B cell (primary cell): ENCODE measurements at regions of chr6 and their contacts with region 1.

Region 1: DNA sequence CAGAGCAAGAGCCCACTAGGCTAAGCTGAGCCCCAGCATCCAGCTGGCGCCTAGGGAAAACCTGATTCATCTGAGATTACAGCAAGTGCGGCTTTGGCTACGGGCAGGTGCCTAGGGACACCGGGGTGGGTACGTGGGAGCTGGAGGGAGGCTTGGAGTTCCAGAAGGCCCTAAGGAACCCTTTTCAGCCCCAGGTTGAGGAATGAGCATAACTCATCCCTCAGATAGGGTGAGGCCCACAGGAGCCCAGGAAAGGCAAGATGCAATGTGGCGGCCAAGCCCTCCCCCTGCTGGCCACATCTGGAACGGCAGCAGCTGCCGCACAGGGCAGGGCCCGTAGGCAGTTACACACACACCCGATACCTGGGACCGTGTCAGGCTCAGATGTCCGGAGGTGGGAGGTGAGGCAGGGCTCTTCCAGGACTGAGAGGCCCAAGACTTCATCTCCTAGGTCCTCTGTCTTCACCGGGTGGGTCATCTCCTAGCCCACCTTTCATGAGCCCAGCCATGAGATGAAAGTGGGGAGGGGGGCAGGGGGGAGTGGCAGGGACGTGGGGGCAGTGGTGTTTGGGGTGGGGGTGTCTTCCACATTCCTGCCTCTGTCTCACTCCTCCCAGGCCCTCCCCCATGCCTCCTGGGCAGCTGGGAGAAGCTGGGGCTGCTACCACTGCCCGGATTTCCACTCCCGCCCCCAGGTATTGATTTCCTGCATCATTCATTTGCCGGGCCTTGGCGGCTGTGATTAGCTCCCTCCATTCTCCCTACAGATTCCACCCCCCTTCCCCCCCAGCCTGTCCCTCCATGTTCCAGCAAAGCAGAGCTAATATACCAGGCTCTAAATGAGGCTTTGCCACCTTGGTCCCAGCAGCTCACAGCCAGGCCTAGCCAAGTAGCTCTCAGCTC is 5.5 kb downstream of the MDGA1 start:
- DNase-seq: peak; percentile 84
- ATAC-seq: peak; percentile 82
- H3K4me3 ChIP-seq: no peak overlapping the region
- H3K4me3 Mint-ChIP-seq: no peak overlapping the region
- H3K27ac ChIP-seq: no peak overlapping the region
- H3K27ac Mint-ChIP-seq: no peak overlapping the region
- H3K4me1 ChIP-seq: peaks cover 21 to 23% of the 10 kb centered on the region in 2 donors
- H3K4me1 Mint-ChIP-seq: peaks cover 26% of the 10 kb centered on the region
- H3K27me3 ChIP-seq: peaks cover 0 to 34% (median 14%) of the 10 kb centered on the region in 4 experiments
- H3K27me3 Mint-ChIP-seq: peaks cover 26% of the 10 kb centered on the region
- CTCF ChIP-seq: peak; percentile 95

Region 2: GRCh38 chr6:37381579-37381978 is 310.6 kb before region 1 on chr6:
- CTCF ChIA-PET with region 1: interaction called, 3 read pairs
- POLR2A ChIA-PET with region 1: no interaction called
- intact Hi-C with region 1: loop called (anchors 5 kb)
- DNase-seq: peak; percentile 67
- ATAC-seq: peak; percentile 28
- H3K4me3 ChIP-seq: no peak overlapping the region
- H3K4me3 Mint-ChIP-seq: no peak overlapping the region
- H3K27ac ChIP-seq: no peak overlapping the region
- H3K27ac Mint-ChIP-seq: no peak overlapping the region
- H3K4me1 ChIP-seq: peaks cover 8 to 26% of the 10 kb centered on the region in 2 donors
- H3K4me1 Mint-ChIP-seq: peaks cover 23% of the 10 kb centered on the region
- H3K27me3 ChIP-seq: no peaks in the 10 kb centered on the region
- H3K27me3 Mint-ChIP-seq: no peaks in the 10 kb centered on the region
- CTCF ChIP-seq: peak; percentile 75

Region 3: GRCh38 chr6:37538107-37538506 is 154.0 kb before region 1 on chr6:
- CTCF ChIA-PET with region 1: interaction called, 56 read pairs
- POLR2A ChIA-PET with region 1: no interaction called
- intact Hi-C with region 1: loop called (anchors 1 kb)
- DNase-seq: no peak
- ATAC-seq: no peak
- H3K4me3 ChIP-seq: no peak overlapping the region
- H3K4me3 Mint-ChIP-seq: peak overlapping the region; percentile 34
- H3K27ac ChIP-seq: no peak overlapping the region
- H3K27ac Mint-ChIP-seq: peak overlapping the region; percentile 32
- H3K4me1 ChIP-seq: peaks cover 30 to 56% of the 10 kb centered on the region in 2 donors
- H3K4me1 Mint-ChIP-seq: peaks cover 15% of the 10 kb centered on the region
- H3K27me3 ChIP-seq: peaks cover 0 to 34% (median 9%) of the 10 kb centered on the region in 4 experiments
- H3K27me3 Mint-ChIP-seq: peaks cover 13% of the 10 kb centered on the region
- CTCF ChIP-seq: no peak

Region 4: GRCh38 chr6:37679539-37680476 is 12.3 kb before region 1 on chr6:
- CTCF ChIA-PET with region 1: interaction called, 26 read pairs
- POLR2A ChIA-PET with region 1: interaction called, 3 read pairs
- intact Hi-C with region 1: loop called (anchors 1 kb)
- DNase-seq: peak; percentile 84
- ATAC-seq: peak; percentile 87
- H3K4me3 ChIP-seq: peak overlapping the region in 3 of 5 experiments; percentile 5 to 34 (median 12)
- H3K4me3 Mint-ChIP-seq: peak overlapping the region; percentile 82
- H3K27ac ChIP-seq: peak overlapping the region; percentile 67 to 77
- H3K27ac Mint-ChIP-seq: peak overlapping the region; percentile 94
- H3K4me1 ChIP-seq: peaks cover 24 to 42% of the 10 kb centered on the region in 2 donors
- H3K4me1 Mint-ChIP-seq: peaks cover 48% of the 10 kb centered on the region
- H3K27me3 ChIP-seq: no peaks in the 10 kb centered on the region
- H3K27me3 Mint-ChIP-seq: no peaks in the 10 kb centered on the region
- CTCF ChIP-seq: no peak